Heart left ventricle (tissue), 16 donors: ENCODE measurements at regions of chr20 and their contacts with region 1.

Region 1: GRCh38 chr20:8131598-8132483 is at the start of gene PLCB1:
- DNase-seq: peak; percentile 85 to 93 (median 89)
- ATAC-seq: peak; percentile 88 to 97 (median 95)
- H3K4me3 ChIP-seq: peak within 1 kb of the TSS; percentile 59 to 97 (median 78)
- H3K27ac ChIP-seq: peak within 1 kb of the TSS; percentile 53 to 91 (median 82)
- H3K4me1 ChIP-seq: peaks cover 0 to 30% (median 7%) of the 10 kb centered on the region in 12 donors
- H3K27me3 ChIP-seq: peaks cover 0 to 7% (median 0%) of the 10 kb centered on the region in 9 donors
- CTCF ChIP-seq: peak; percentile 73 to 99 (median 81)
- POLR2A ChIP-seq: peak in 1 of 2 donors; percentile 13
- total RNA-seq, gene PLCB1: 4.0 to 12.1 (median 8.0) TPM

Region 2: DNA sequence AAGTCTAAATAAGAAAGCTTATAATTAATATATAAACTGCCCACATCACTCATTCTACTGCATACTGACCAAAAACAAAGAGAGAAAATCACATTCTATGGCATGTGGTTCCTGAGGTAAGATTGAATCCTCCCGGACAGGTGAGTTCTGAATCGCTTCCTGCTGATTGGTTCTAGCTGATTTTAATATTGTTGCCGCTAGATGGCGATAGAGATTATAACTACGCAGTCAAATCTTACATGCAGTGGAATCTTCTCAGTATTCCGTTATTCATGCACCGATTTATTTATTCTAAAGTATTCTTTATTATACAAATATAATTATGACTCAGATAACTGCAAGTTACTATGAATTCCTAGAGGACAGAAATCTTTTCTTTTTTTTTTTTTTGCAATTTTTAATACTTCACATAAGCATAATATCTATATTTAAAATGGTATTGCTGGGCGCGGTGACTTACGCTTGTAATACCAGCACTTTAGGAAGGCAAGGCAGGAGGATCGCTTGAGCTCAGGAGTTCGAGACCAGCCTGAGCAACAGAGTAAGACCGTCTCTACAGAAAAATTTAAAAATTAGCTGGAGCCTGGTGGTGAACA is 88.1 kb before region 1 on chr20:
- intact Hi-C with region 1: loop called in 5 of 10 experiments (anchors 2 to 10 kb)
- DNase-seq: peak in 1 of 5 donors; percentile 30
- ATAC-seq: peak in 2 of 4 donors; percentile 64 to 68
- H3K4me3 ChIP-seq: no peak overlapping the region
- H3K27ac ChIP-seq: no peak overlapping the region
- H3K4me1 ChIP-seq: peaks cover 0 to 2% (median 0%) of the 10 kb centered on the region in 12 donors
- H3K27me3 ChIP-seq: peaks cover 0 to 7% (median 0%) of the 10 kb centered on the region in 9 donors
- CTCF ChIP-seq: peak; percentile 61 to 87 (median 80)
- POLR2A ChIP-seq: no peak

Region 3: GRCh38 chr20:8244637-8245036 is 112.8 kb after region 1 on chr20:
- intact Hi-C with region 1: loop called in 2 of 10 experiments (anchors 10 kb)
- DNase-seq: peak in 4 of 5 donors; percentile 25 to 57 (median 33)
- ATAC-seq: peak; percentile 49 to 85 (median 72)
- H3K4me3 ChIP-seq: no peak overlapping the region
- H3K27ac ChIP-seq: peak overlapping the region in 8 of 12 donors; percentile 21 to 55 (median 42)
- H3K4me1 ChIP-seq: peaks cover 0 to 39% (median 25%) of the 10 kb centered on the region in 12 donors
- H3K27me3 ChIP-seq: no peaks in the 10 kb centered on the region
- CTCF ChIP-seq: no peak
- POLR2A ChIP-seq: no peak

Region 4: GRCh38 chr20:8389381-8390036 is 257.7 kb after region 1 on chr20:
- intact Hi-C with region 1: loop called (anchors 1 to 5 kb)
- DNase-seq: no peak
- ATAC-seq: peak in 3 of 4 donors; percentile 43 to 61 (median 58)
- H3K4me3 ChIP-seq: peak overlapping the region in 1 of 12 donors; percentile 12
- H3K27ac ChIP-seq: peak overlapping the region in 5 of 12 donors; percentile 16 to 57 (median 48)
- H3K4me1 ChIP-seq: peaks cover 0 to 41% (median 13%) of the 10 kb centered on the region in 12 donors
- H3K27me3 ChIP-seq: no peaks in the 10 kb centered on the region
- CTCF ChIP-seq: peak; percentile 48 to 74 (median 63)
- POLR2A ChIP-seq: no peak

Region 5: DNA sequence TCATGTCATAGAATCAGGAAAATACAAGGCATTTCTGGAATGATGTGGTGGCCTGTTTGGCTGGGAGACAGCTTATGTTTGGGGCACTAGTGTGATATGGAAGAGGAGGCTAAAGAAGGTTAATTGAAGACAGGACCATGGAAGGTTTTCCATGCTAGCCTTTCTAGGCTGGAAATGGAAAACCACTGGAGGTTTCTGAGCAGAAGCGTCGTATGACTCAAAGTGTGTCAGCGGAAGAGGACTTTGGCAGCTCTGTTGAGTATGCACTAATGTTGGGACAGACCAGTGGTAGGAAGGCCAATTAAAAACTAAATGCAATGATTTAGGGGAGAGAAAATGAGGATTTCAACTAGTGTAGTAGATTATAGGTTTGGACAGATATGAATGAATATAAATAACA is 413.4 kb after region 1 on chr20:
- intact Hi-C with region 1: loop called in 1 of 10 experiments (anchors 5 kb)
- DNase-seq: no peak
- ATAC-seq: peak in 1 of 4 donors; percentile 75
- H3K4me3 ChIP-seq: no peak overlapping the region
- H3K27ac ChIP-seq: no peak overlapping the region
- H3K4me1 ChIP-seq: peaks cover 0 to 34% (median 17%) of the 10 kb centered on the region in 12 donors
- H3K27me3 ChIP-seq: no peaks in the 10 kb centered on the region
- CTCF ChIP-seq: no peak
- POLR2A ChIP-seq: no peak

Region 6: DNA sequence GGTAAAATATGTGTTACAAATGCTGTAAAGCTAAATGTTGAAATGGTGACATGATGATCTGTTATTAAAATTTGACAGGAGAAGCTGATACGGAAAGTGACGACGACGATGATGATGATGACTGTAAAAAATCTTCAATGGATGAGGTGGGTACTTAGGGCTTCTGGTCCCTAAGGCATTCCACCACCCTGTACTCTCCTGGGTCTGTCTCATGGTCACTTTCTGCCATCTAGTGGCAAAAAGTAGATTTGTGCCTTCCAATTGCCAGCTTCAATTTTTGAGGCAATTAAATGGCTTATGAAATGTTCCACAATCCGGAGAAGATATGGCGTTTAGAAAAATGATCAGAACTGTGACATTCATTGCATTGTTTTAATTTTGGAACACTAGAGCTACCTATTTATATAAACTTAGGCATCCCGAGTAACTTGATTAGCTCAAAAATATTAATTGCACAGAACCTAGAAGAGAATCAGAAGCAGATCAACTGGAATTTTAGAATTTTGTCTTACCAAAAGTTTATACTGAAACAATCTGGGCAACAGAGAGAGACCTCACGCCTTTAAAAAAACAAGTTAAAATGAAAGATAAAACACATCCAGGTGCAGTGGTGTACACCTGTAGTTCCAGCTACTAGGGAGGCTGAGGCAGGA is 590.6 kb after region 1 on chr20:
- intact Hi-C with region 1: loop called (anchors 2 to 5 kb)
- DNase-seq: peak in 2 of 5 donors; percentile 26 to 27
- ATAC-seq: peak; percentile 53 to 86 (median 81)
- H3K4me3 ChIP-seq: no peak overlapping the region
- H3K27ac ChIP-seq: no peak overlapping the region
- H3K4me1 ChIP-seq: peaks cover 0 to 2% (median 0%) of the 10 kb centered on the region in 12 donors
- H3K27me3 ChIP-seq: no peaks in the 10 kb centered on the region
- CTCF ChIP-seq: peak; percentile 64 to 87 (median 80)
- POLR2A ChIP-seq: no peak